ENCODE measurements at regions of chr5 and their contacts with region 1.

Region 1: DNA sequence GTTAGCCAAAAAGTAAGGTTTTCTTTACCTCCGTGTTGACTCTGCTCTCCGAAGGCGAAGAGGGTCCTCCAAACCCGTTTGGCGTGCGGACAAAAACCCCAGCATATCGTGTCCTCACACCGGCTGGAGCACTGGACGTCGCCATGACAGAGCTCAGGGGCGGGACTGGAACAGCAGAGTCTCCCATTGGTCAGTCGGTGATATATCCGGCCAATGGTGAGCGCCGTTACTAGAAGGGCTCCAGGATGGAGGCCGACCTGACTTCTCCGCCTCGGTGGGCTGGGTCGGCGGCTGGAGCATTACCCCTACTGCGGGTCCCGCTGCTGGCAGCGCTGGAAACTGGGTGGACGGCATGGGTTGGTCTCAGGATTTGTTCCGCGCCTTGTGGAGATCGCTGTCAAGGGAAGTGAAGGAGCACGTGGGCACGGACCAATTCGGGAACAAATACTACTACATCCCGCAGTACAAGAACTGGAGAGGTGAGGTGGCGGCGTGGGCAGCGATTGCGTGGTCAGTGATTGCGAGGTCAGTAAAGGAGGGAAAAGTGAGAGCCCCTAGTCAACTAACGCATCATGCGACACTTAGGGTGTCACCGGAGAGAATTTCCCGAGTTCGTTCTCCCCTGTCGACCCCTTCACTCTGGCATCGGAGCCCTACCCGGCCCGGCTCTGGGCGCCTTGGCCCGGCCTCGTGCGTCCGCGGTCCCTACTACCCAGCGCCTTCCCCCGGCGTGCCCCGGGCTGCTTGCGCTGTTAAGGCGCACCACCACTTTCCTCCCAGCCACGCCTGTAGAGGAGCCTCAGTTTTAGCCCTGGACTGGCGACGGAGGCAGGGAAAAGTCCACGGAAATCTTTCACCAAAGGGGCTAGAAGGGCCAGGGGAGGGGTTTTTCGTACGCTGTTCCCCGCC is at the starts of genes ERCC8 and NDUFAF2:
- DNase-seq: peak; percentile 91 to 93
- H3K4me3 ChIP-seq: peak within 1 kb of the TSS; percentile 76
- H3K4me1 ChIP-seq: peaks cover 8% of the 10 kb centered on the region
- H3K27me3 ChIP-seq: no peaks in the 10 kb centered on the region

Region 2: DNA sequence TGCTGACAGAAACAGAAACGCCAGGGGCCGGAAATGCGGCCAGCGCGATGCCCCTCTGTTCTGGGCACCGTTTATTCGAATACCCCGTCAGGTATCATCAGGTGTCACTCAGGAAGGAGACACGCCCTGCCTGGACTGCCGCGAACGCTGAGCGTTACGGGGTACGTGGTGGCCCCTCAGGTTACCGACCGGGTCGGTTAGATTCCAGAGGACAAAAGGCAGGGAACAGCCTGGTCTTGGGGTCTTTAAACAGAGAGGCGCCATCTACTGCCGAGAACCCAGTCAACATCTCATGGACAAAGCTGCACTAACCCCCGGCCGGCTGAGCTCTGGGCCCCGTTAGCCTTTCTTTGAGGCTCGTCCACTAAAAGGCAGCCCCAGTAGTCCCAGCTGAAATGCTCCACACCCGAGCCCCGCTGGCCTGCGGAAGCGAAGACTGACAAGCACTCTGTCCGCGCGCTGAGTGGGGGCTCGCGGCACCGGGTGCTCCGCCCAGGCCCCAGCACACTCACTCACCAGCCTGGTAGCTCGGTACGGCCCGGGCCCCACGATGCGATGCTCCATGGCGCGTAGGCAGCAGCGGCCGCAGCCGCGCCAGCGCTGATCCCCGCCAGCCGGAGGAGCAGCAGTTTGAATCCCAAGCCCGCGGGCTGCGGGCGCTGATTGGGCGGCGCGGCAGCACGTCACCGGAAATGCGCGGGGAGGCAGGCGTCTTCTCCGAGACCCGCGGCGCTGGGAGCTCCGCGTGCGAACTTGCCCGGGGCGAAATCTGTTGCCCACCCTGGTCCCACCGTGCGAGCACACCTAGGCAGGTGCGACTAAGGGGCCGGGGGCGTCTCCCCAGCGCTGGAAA is 245.4 kb before region 1 on chr5 and contains the start of gene DEPDC1B:
- in situ Hi-C with region 1: loop called (anchors 25 kb)
- DNase-seq: peak; percentile 81 to 92
- H3K4me3 ChIP-seq: peak within 1 kb of the TSS; percentile 92
- H3K4me1 ChIP-seq: peaks cover 16% of the 10 kb centered on the region
- H3K27me3 ChIP-seq: no peaks in the 10 kb centered on the region

Measured in HAP-1 (cell line).